MCF 10A (cell line): ENCODE measurements at regions of chr20 and their contacts with region 1.

Region 1: DNA sequence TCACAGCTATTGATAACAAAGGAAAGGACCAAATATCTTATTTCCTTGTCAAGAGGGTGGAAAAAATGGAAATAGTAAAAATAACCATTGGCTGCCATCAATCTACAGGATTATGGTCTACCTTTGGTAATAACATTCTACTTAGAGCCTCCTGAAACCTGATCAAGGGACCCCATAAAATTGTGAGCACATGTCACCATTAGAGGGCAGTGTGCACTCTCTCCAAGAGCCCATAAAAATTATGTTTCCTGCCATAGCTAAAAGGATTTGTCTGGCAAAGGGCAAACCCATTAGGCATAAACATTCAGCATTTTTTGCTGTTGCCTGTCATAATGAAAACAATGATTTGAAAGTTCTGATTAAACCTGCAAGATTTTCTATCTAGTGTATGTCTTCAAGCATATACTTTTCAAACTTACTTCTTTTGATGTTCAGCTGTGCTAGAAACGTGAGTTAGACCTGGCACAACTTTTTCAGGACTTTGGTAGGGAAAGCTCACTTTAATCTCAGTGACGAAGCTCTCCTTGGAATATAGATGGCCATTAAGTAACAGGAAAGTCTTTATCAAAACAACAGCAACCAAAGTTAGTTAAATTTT is 120.7 kb upstream of the ZFP64 start:
- DNase-seq: peak; percentile 67
- H3K4me3 Mint-ChIP-seq: no peak overlapping the region
- H3K27ac Mint-ChIP-seq: no peak overlapping the region
- H3K4me1 Mint-ChIP-seq: peaks cover 6% of the 10 kb centered on the region
- H3K27me3 Mint-ChIP-seq: peaks cover 25% of the 10 kb centered on the region
- CTCF ChIP-seq: peak; percentile 60

Region 2: DNA sequence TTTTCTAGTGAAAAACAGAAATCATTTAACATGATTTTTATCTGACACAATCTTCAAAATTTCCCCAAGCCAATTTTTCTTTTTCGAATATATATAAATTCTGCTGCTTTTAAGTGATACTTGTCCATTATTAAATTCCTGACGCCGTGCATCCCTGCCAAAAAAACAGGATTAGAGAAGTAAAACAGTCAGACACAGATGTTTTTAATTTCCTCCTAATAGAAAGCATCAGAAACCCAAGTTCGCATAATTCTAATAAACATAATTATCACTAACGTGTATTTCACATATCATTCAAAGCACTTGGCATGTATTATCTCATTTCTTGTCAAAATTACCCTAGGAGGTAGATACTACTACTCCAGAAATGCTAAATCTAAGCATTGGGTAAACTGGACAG is 300.2 kb before region 1 on chr20:
- CTCF ChIA-PET with region 1: no interaction called
- POLR2A ChIA-PET with region 1: no interaction called
- intact Hi-C with region 1: no loop called
- DNase-seq: no peak
- H3K4me3 Mint-ChIP-seq: no peak overlapping the region
- H3K27ac Mint-ChIP-seq: no peak overlapping the region
- H3K4me1 Mint-ChIP-seq: no peaks in the 10 kb centered on the region
- H3K27me3 Mint-ChIP-seq: no peaks in the 10 kb centered on the region
- CTCF ChIP-seq: no peak

Region 3: DNA sequence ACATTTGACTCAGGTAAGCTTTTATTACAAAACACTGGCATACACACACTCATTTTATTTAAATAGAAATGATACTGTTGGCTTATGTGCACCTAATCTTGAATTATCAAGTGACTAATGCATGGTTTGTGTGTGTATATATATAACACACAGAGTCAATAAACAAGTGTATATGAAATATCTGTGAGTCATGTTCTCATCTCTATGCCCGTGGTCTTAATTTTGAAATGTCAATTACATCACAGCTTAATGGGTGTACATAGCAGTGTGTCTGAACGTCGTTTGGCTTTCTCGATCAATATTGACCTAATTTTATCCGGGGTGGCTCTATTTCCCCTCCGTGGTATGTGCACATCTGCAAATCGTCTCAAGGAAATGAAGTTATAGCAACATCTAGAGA is 16.7 kb before region 1 on chr20:
- CTCF ChIA-PET with region 1: interaction called, 37 read pairs
- POLR2A ChIA-PET with region 1: interaction called, 4 read pairs
- intact Hi-C with region 1: no loop called
- DNase-seq: peak; percentile 24
- H3K4me3 Mint-ChIP-seq: no peak overlapping the region
- H3K27ac Mint-ChIP-seq: no peak overlapping the region
- H3K4me1 Mint-ChIP-seq: no peaks in the 10 kb centered on the region
- H3K27me3 Mint-ChIP-seq: no peaks in the 10 kb centered on the region
- CTCF ChIP-seq: no peak

Region 4: GRCh38 chr20:52372169-52372568 is 59.9 kb after region 1 on chr20:
- CTCF ChIA-PET with region 1: interaction called, 20 read pairs
- POLR2A ChIA-PET with region 1: no interaction called
- intact Hi-C with region 1: no loop called
- DNase-seq: no peak
- H3K4me3 Mint-ChIP-seq: no peak overlapping the region
- H3K27ac Mint-ChIP-seq: no peak overlapping the region
- H3K4me1 Mint-ChIP-seq: no peaks in the 10 kb centered on the region
- H3K27me3 Mint-ChIP-seq: peaks cover 22% of the 10 kb centered on the region
- CTCF ChIP-seq: no peak

Region 5: DNA sequence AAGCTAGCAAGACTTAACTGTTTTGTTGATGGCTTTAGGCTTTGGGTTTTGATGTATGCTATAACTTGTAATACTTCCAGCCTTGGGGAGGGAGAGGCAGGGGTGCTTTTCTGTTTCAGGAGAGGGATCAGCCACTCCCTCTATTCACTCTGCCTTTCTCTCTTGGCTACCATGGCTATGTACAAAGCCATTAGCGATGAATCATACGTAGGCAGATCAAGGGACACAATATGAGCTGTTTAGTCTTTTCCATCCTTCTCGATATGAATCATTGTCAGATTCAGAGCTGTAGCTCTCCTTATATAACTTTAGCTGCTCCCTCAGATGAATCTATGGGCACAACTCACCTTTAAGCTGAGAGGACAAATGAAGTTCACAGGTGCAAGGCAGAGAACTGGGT is 890.5 kb after region 1 on chr20:
- CTCF ChIA-PET with region 1: interaction called, 10 read pairs
- POLR2A ChIA-PET with region 1: no interaction called
- intact Hi-C with region 1: no loop called
- DNase-seq: peak; percentile 11
- H3K4me3 Mint-ChIP-seq: no peak overlapping the region
- H3K27ac Mint-ChIP-seq: no peak overlapping the region
- H3K4me1 Mint-ChIP-seq: no peaks in the 10 kb centered on the region
- H3K27me3 Mint-ChIP-seq: no peaks in the 10 kb centered on the region
- CTCF ChIP-seq: no peak

Region 6: DNA sequence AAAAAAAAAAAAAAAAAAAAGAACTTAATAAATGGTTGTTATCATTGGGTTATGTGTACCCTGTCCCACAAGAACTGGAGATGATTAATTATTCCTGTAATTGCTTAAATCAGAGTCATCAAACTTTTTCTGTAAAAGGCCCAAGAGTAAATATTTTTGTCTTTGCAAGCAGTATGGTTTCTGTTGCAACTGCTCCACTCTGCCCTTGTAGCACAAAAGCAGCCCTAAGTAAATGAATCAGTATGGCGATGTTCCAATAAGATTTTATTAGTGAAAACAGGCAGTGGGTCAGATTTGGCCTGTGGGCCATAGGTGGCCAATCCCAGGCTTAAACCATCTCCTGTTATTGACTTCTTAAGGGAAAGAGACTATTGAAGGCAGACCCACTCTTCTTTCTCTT is 912.6 kb after region 1 on chr20:
- CTCF ChIA-PET with region 1: interaction called, 85 read pairs
- POLR2A ChIA-PET with region 1: interaction called, 7 read pairs
- intact Hi-C with region 1: no loop called
- DNase-seq: no peak
- H3K4me3 Mint-ChIP-seq: no peak overlapping the region
- H3K27ac Mint-ChIP-seq: no peak overlapping the region
- H3K4me1 Mint-ChIP-seq: peaks cover 11% of the 10 kb centered on the region
- H3K27me3 Mint-ChIP-seq: no peaks in the 10 kb centered on the region
- CTCF ChIP-seq: no peak

Region 7: DNA sequence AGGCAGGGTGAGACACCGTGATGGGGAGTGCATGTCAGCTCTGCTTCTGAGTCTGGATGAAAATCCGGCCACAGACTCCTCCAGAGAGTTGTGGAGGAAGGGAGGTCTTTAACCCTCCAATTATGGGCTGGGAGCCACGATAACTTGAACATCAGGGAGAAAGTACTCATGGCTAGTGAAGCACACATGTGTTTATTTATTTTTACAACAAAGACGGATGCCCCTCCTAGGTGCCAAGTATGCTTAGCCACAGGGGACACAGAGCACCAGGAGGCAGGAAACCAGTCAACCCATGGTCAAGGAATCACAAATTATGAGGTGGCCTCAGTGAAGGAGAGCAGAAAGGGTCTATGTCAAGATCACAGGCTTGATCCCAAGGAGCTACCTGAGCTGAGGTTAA is 1227.3 kb after region 1 on chr20:
- CTCF ChIA-PET with region 1: interaction called, 159 read pairs
- POLR2A ChIA-PET with region 1: no interaction called
- intact Hi-C with region 1: no loop called
- DNase-seq: no peak
- H3K4me3 Mint-ChIP-seq: no peak overlapping the region
- H3K27ac Mint-ChIP-seq: no peak overlapping the region
- H3K4me1 Mint-ChIP-seq: no peaks in the 10 kb centered on the region
- H3K27me3 Mint-ChIP-seq: peaks cover 11% of the 10 kb centered on the region
- CTCF ChIP-seq: no peak

Region 8: DNA sequence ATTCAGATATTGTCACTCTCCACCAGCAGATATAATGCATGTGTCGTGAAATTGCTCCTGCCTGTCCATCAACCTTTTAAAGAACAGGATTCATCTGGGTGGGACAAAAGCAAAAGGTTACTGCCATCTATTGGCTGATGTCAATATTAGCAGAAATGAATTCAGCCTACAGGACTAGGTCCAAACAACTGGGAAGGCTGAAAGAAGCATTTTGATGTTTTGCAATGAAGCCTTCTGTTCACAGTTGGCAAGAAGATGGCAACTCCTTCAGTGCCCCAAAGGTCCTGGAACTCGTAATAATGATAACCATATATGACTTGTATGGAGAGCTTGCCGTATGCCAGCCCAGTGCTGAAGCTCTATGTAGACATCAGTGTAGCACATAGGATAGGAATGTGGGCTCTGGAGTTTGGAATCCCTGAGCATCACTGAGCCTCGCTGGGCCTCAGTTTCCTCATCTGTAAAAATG is 1750.6 kb after region 1 on chr20:
- CTCF ChIA-PET with region 1: no interaction called
- POLR2A ChIA-PET with region 1: interaction called, 3 read pairs
- intact Hi-C with region 1: loop called (anchors 2 kb)
- DNase-seq: peak; percentile 64
- H3K4me3 Mint-ChIP-seq: no peak overlapping the region
- H3K27ac Mint-ChIP-seq: no peak overlapping the region
- H3K4me1 Mint-ChIP-seq: peaks cover 21% of the 10 kb centered on the region
- H3K27me3 Mint-ChIP-seq: no peaks in the 10 kb centered on the region
- CTCF ChIP-seq: peak; percentile 59